Activated CD8-positive, alpha-beta T cell treated with anti-CD3 and anti-CD28 coated beads for 36 hours (primary cell): ENCODE measurements at regions of chr18 and their contacts with region 1.

Region 1: GRCh38 chr18:36284671-36285295 is 12.7 kb upstream of the FHOD3 start:
- DNase-seq: peak; percentile 57
- ATAC-seq: peak; percentile 74
- H3K4me3 Mint-ChIP-seq: no peak overlapping the region
- H3K27ac Mint-ChIP-seq: no peak overlapping the region
- H3K4me1 Mint-ChIP-seq: no peaks in the 10 kb centered on the region
- H3K27me3 Mint-ChIP-seq: peaks cover 15% of the 10 kb centered on the region
- CTCF ChIP-seq: peak; percentile 79

Region 2: GRCh38 chr18:35407871-35408481 is 876.8 kb before region 1 on chr18:
- CTCF ChIA-PET with region 1: no interaction called
- POLR2A ChIA-PET with region 1: no interaction called
- intact Hi-C with region 1: loop called (anchors 10 kb)
- DNase-seq: peak; percentile 59
- ATAC-seq: peak; percentile 79
- H3K4me3 Mint-ChIP-seq: no peak overlapping the region
- H3K27ac Mint-ChIP-seq: no peak overlapping the region
- H3K4me1 Mint-ChIP-seq: peaks cover 11% of the 10 kb centered on the region
- H3K27me3 Mint-ChIP-seq: peaks cover 2% of the 10 kb centered on the region
- CTCF ChIP-seq: peak; percentile 81

Region 3: GRCh38 chr18:35756506-35757117 is 528.2 kb before region 1 on chr18:
- CTCF ChIA-PET with region 1: interaction called, 11 read pairs
- POLR2A ChIA-PET with region 1: no interaction called
- intact Hi-C with region 1: loop called (anchors 5 kb)
- DNase-seq: peak; percentile 62
- ATAC-seq: peak; percentile 69
- H3K4me3 Mint-ChIP-seq: no peak overlapping the region
- H3K27ac Mint-ChIP-seq: no peak overlapping the region
- H3K4me1 Mint-ChIP-seq: no peaks in the 10 kb centered on the region
- H3K27me3 Mint-ChIP-seq: peaks cover 19% of the 10 kb centered on the region
- CTCF ChIP-seq: peak; percentile 95

Region 4: GRCh38 chr18:36095936-36096519 is 188.8 kb before region 1 on chr18:
- CTCF ChIA-PET with region 1: interaction called, 53 read pairs
- POLR2A ChIA-PET with region 1: no interaction called
- intact Hi-C with region 1: loop called (anchors 1 kb)
- DNase-seq: no peak
- ATAC-seq: peak; percentile 42
- H3K4me3 Mint-ChIP-seq: no peak overlapping the region
- H3K27ac Mint-ChIP-seq: no peak overlapping the region
- H3K4me1 Mint-ChIP-seq: peaks cover 7% of the 10 kb centered on the region
- H3K27me3 Mint-ChIP-seq: peaks cover 1% of the 10 kb centered on the region
- CTCF ChIP-seq: peak; percentile 80

Region 5: DNA sequence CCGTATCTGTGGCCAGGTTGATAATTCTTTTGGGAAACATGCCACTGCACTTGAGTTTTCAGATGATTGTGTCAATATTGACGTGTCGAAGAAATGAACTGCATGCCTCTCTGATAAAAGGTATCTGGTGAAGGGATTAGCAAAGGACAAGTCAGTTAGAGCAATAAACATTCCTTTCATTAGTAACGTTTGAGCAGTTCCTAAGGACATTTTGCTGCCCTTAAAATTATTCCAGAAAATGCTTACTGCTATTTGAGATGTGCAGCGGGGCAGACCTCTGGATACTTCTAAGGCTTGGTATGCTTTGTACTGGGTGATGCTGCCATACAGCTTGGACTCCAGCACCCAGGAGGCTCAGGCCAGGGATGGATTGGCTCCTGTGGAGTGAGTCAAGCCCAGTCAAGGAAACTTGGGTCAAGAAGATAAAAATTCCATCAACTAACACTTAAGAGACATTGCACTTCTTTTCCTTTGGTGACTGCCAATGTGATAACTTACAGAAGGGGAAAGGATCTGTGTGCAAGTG is 179.4 kb after region 1 on chr18:
- CTCF ChIA-PET with region 1: no interaction called
- POLR2A ChIA-PET with region 1: no interaction called
- intact Hi-C with region 1: no loop called
- DNase-seq: no peak
- ATAC-seq: no peak
- H3K4me3 Mint-ChIP-seq: no peak overlapping the region
- H3K27ac Mint-ChIP-seq: no peak overlapping the region
- H3K4me1 Mint-ChIP-seq: no peaks in the 10 kb centered on the region
- H3K27me3 Mint-ChIP-seq: peaks cover 2% of the 10 kb centered on the region
- CTCF ChIP-seq: no peak